Gastrocnemius medialis (tissue), 4 donors: ENCODE measurements at regions of chr22 and their contacts with region 1.

Region 1: GRCh38 chr22:31148953-31149627 is 8.8 kb upstream of the PLA2G3 start:
- DNase-seq: peak; percentile 27 to 56
- ATAC-seq: peak; percentile 90 to 96
- H3K4me3 ChIP-seq: no peak overlapping the region
- H3K27ac ChIP-seq: peak overlapping the region; percentile 36 to 70 (median 57)
- H3K4me1 ChIP-seq: peaks cover 0 to 9% of the 10 kb centered on the region in 2 donors
- H3K27me3 ChIP-seq: no peaks in the 10 kb centered on the region
- CTCF ChIP-seq: peak; percentile 87 to 95 (median 93)
- POLR2A ChIP-seq: no peak

Region 2: DNA sequence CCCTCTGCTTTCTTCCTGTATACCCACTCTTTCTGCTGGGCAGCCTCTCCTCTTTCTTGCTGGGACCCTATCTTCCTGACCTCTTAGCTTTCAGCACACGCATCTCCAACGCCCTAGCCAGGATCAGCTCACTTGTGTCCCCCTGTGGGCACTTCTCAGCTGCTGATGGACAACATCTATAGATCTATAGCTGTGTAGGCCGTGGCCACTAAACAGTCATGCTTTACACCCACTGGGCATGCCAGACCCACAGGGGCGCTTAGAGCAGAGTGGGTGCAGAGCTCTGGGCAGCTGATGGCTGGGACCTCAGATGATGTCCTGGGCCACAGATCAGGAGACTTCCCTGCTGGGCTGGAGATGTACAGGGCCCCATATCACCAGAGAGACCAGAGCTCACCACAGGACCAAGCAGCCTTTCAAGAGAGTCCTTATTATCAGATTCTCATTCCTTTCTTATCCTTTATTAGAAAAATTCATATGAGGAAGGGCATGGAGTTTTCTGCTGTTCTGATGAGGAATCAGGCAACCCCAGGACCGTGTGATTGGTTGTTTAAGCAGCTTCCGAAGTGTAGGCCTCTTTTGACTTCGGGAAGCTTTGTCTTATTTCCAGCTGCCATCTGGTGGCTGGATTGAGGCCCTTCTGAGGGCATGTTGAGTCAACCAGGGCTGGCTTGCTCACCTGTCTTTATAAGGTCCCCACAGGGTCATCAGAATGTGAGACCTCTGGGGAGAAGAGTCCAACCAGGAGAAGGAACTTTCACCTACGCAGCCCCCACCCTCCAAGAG is 393.9 kb before region 1 on chr22:
- in situ Hi-C with region 1: loop called in 1 of 4 experiments (anchors 25 kb)
- intact Hi-C with region 1: no loop called
- DNase-seq: peak; percentile 18 to 40
- ATAC-seq: peak; percentile 87 to 90
- H3K4me3 ChIP-seq: no peak overlapping the region
- H3K27ac ChIP-seq: no peak overlapping the region
- H3K4me1 ChIP-seq: no peaks in the 10 kb centered on the region
- H3K27me3 ChIP-seq: no peaks in the 10 kb centered on the region
- CTCF ChIP-seq: peak; percentile 46 to 78 (median 74)
- POLR2A ChIP-seq: no peak

Region 3: GRCh38 chr22:30947816-30948454 is 201.2 kb before region 1 on chr22:
- in situ Hi-C with region 1: loop called in 2 of 4 experiments (anchors 10 kb)
- intact Hi-C with region 1: loop called (anchors 5 kb)
- DNase-seq: no peak
- ATAC-seq: peak; percentile 59 to 71
- H3K4me3 ChIP-seq: no peak overlapping the region
- H3K27ac ChIP-seq: peak overlapping the region in 2 of 4 donors; percentile 39 to 41
- H3K4me1 ChIP-seq: peaks cover 0 to 14% of the 10 kb centered on the region in 2 donors
- H3K27me3 ChIP-seq: no peaks in the 10 kb centered on the region
- CTCF ChIP-seq: peak; percentile 20 to 58 (median 45)
- POLR2A ChIP-seq: no peak

Region 4: DNA sequence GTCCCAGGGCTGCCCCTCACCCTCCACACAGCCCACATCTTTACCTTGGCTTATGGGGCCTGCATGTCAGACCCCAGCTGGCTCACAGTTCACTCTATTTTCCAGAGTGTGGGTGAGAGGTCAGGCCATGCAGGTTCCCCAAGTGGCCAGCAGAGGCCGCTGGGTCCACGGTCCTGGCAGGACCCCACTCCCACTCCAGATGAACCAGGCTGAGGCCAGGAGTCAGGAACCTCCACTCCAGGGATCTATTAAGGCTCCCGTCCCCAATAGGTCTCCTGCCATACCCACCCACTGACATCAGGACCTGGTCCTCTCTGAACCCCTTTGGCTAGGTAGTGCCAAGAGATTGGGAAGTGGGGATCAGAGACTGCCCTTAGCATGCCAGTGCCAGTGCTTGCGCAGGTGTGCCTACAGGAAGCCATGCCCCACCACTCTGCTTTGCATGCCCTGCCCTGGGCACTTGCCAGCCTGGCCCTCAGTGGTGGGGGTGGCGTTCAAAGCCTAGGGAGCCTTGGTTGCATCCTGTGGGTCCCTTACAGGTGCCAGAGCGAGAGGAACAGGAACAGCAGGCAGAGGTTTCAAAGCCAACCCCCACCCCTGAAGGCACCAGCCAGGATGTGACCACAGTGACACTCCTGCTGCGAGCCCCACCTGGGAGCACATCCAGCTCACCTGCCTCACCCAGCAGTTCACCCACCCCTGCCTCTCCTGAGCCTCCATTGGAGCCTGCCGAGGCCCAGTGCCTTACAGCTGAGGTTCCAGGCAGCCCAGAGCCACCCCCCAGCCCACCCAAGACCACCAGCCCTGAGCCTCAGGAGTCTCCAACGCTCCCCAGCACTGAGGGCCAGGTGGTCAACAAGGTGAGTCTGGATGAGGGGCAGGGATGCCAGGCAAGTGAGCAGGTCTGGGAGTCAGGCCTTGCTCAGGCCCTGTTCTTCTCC is 59.7 kb before region 1 on chr22:
- in situ Hi-C with region 1: loop called in 2 of 4 experiments (anchors 5 to 10 kb)
- intact Hi-C with region 1: loop called (anchors 1 kb)
- DNase-seq: peak; percentile 44 to 62
- ATAC-seq: peak; percentile 17 to 22
- H3K4me3 ChIP-seq: no peak overlapping the region
- H3K27ac ChIP-seq: peak overlapping the region; percentile 20 to 63 (median 54)
- H3K4me1 ChIP-seq: peaks cover 35 to 39% of the 10 kb centered on the region in 2 donors
- H3K27me3 ChIP-seq: no peaks in the 10 kb centered on the region
- CTCF ChIP-seq: peak; percentile 90 to 94 (median 93)
- POLR2A ChIP-seq: no peak

Region 5: GRCh38 chr22:31107178-31107893 is 41.8 kb before region 1 on chr22 and contains the start of gene SELENOM:
- in situ Hi-C with region 1: no loop called
- intact Hi-C with region 1: loop called (anchors 1 kb)
- DNase-seq: peak; percentile 96 to 97
- ATAC-seq: peak; percentile 92 to 94
- H3K4me3 ChIP-seq: peak within 1 kb of the TSS; percentile 68 to 81 (median 80)
- H3K27ac ChIP-seq: peak within 1 kb of the TSS; percentile 93 to 98 (median 96)
- H3K4me1 ChIP-seq: peaks cover 22 to 30% of the 10 kb centered on the region in 2 donors
- H3K27me3 ChIP-seq: no peaks in the 10 kb centered on the region
- CTCF ChIP-seq: peak; percentile 89 to 97 (median 94)
- POLR2A ChIP-seq: peak; percentile 85 to 87
- total RNA-seq, gene SELENOM: 144 to 184 (median 157) TPM

Region 6: DNA sequence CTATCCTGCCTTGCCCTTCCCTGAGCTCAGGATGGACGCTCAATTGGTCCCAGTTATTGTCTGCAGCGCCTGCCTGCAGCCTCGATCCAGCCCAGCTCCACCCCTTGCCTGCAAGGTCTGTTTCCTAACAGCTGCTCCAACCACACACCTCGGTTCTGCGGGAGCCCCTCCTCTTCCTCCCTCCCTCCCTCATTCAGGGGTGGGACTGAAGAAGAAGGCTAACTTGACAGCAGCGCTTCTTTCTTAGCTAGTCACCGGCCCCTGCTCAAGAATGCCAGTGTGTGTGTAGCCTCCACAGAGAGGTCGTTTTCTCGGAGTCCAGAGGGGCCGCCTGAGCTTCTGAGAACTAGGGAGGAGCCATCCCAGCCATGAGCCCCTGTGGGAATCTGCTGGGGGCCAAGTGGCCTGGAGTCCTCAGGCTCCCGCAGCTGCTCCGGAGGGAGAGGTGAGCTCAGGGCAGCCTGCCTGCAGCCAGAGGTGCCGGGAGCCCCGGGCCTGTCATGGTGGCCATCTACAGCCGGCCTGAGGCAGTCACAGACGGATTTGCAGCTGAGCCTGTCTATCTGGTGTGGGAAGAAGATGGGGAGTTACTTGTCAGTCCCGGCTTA is 99.2 kb after region 1 on chr22:
- in situ Hi-C with region 1: no loop called
- intact Hi-C with region 1: no loop called
- DNase-seq: peak; percentile 55 to 74
- ATAC-seq: peak; percentile 56 to 68
- H3K4me3 ChIP-seq: peak overlapping the region; percentile 31 to 61 (median 52)
- H3K27ac ChIP-seq: peak overlapping the region; percentile 42 to 75 (median 62)
- H3K4me1 ChIP-seq: peaks cover 30 to 36% of the 10 kb centered on the region in 2 donors
- H3K27me3 ChIP-seq: no peaks in the 10 kb centered on the region
- CTCF ChIP-seq: no peak
- POLR2A ChIP-seq: peak; percentile 30 to 54